ENCODE measurements at regions of chr4 and their contacts with region 1.

Region 1: DNA sequence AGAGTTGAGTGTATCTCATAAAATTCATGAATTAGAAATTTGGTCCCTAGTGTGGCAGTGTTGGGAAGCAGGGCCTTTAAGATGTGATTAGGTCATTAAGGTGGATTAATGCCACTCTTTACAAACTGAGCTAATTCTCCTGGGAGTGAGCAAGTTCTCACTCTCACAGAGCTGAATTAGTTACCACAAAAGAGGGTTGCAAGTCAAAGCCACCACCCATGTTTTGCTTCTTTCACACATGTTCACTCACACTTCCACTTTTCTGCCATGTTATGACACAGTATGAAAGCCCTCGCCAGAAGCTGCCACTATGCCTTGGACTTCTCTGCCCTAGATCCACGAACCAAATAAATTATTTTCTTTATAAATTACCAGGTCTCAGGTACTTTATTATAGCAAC is 332.1 kb downstream of the ARAP2 start:
- DNase-seq: no peak
- H3K4me3 ChIP-seq: no peak overlapping the region
- H3K27ac ChIP-seq: no peak overlapping the region
- H3K4me1 ChIP-seq: no peaks in the 10 kb centered on the region
- H3K27me3 ChIP-seq: no peaks in the 10 kb centered on the region
- CTCF ChIP-seq: no peak

Region 2: GRCh38 chr4:35725131-35725530 is 187.0 kb before region 1 on chr4:
- CTCF ChIA-PET with region 1: no interaction called
- POLR2A ChIA-PET with region 1: no interaction called
- intact Hi-C with region 1: loop called (anchors 5 kb)
- DNase-seq: no peak
- H3K4me3 ChIP-seq: no peak overlapping the region
- H3K27ac ChIP-seq: no peak overlapping the region
- H3K4me1 ChIP-seq: no peaks in the 10 kb centered on the region
- H3K27me3 ChIP-seq: no peaks in the 10 kb centered on the region
- CTCF ChIP-seq: no peak

Region 3: DNA sequence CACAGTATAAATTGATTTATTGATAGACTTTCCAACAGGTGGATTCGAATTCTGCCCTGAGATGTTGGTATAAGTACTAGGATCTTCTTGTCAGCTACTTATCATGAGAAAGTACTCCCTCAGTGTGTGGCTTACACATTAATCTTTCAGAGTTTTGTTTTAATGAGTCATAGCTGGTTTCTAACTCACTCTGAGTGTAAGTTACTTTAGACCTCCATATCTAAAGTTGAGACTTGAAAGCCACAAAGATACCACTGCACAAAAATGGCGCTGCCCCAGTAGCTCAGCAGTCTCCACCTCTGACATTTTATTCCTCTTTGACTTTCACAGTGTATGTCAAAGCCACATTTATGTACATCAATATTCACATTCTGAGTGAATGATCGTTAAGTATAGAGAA is 13.6 kb after region 1 on chr4:
- CTCF ChIA-PET with region 1: no interaction called
- POLR2A ChIA-PET with region 1: no interaction called
- intact Hi-C with region 1: no loop called
- DNase-seq: no peak
- H3K4me3 ChIP-seq: no peak overlapping the region
- H3K27ac ChIP-seq: no peak overlapping the region
- H3K4me1 ChIP-seq: no peaks in the 10 kb centered on the region
- H3K27me3 ChIP-seq: no peaks in the 10 kb centered on the region
- CTCF ChIP-seq: no peak

Measured in A673 (cell line).